CD8-positive, alpha-beta T cell (primary cell): ENCODE measurements at regions of chr19 and their contacts with region 1.

Region 1: GRCh38 chr19:29873024-29873800 is 61.4 kb downstream of the CCNE1 start:
- DNase-seq: peak; percentile 39 to 84 (median 67)
- ATAC-seq: peak; percentile 78
- H3K4me3 ChIP-seq: peak overlapping the region; percentile 18 to 63
- H3K4me3 Mint-ChIP-seq: peak overlapping the region; percentile 78
- H3K27ac ChIP-seq: no peak overlapping the region
- H3K27ac Mint-ChIP-seq: no peak overlapping the region
- H3K4me1 ChIP-seq: peaks cover 4% of the 10 kb centered on the region
- H3K4me1 Mint-ChIP-seq: peaks cover 8% of the 10 kb centered on the region
- H3K27me3 ChIP-seq: peaks cover 0 to 9% of the 10 kb centered on the region in 2 experiments
- H3K27me3 Mint-ChIP-seq: peaks cover 23% of the 10 kb centered on the region
- CTCF ChIP-seq: peak; percentile 94

Region 2: DNA sequence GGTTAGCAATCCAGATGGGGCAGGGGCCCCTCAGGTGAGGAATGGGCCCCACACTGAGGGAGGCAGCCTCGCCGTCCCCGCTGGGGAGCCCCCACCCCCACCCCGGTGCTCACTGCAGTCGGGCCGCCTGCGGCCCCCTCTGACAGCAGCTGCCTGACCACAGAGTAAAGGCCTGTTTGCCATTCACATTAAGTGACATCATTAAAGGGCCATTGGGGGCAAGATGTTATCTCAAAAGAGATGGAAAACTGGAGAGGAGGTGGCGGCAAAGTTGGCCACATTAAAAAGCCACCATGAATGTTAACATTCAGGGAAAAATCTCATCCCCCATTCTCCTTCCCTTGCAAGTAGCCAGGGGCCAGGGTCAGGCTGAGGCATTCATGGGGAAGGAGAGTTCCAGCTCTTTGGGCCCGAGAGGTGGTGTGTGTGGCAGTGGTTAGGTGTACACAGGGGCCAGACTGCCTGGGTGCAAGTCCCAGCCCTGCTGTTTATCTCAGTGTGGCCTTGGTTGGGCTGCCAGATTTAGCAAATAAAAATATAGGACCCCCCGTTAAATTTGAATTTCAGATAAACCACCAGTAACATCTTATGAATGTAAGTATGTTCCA is 326.5 kb before region 1 on chr19:
- CTCF ChIA-PET with region 1: no interaction called
- POLR2A ChIA-PET with region 1: no interaction called
- intact Hi-C with region 1: no loop called
- DNase-seq: no peak
- ATAC-seq: no peak
- H3K4me3 ChIP-seq: no peak overlapping the region
- H3K4me3 Mint-ChIP-seq: no peak overlapping the region
- H3K27ac ChIP-seq: no peak overlapping the region
- H3K27ac Mint-ChIP-seq: no peak overlapping the region
- H3K4me1 ChIP-seq: no peaks in the 10 kb centered on the region
- H3K4me1 Mint-ChIP-seq: no peaks in the 10 kb centered on the region
- H3K27me3 ChIP-seq: peaks cover 0 to 3% of the 10 kb centered on the region in 2 experiments
- H3K27me3 Mint-ChIP-seq: peaks cover 10% of the 10 kb centered on the region
- CTCF ChIP-seq: no peak

Region 3: DNA sequence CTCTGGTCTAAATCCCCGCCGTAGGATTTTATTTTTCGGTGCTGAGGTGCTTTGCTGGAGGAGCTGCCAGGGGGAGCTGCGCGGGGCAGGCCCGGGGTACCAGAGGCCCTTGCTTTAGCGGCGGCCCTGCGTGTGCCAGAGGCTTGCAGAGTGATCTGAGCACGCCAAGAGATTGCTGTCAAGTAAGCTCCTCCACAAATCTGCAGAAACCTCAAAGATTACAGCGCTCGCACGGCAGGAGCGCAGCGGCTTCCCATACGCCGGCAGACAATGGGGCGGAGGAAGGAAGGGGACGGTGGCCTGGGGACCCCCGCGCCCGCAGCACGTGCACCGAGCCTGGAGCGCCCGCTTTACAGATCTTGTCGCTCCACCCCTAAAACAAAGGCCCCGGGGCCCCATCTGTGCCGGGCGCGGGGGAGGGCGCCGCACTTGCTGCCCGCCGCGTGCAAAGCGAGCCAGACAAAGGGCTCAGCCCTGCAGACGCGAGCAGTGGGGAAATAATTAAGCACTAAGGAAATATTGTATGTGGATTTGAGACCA is 149.0 kb before region 1 on chr19:
- CTCF ChIA-PET with region 1: interaction called, 191 read pairs
- POLR2A ChIA-PET with region 1: interaction called, 3 read pairs
- intact Hi-C with region 1: no loop called
- DNase-seq: peak in 6 of 9 experiments; percentile 25 to 67 (median 54)
- ATAC-seq: peak; percentile 80
- H3K4me3 ChIP-seq: peak overlapping the region; percentile 36 to 59
- H3K4me3 Mint-ChIP-seq: peak overlapping the region; percentile 71
- H3K27ac ChIP-seq: no peak overlapping the region
- H3K27ac Mint-ChIP-seq: peak overlapping the region; percentile 46
- H3K4me1 ChIP-seq: peaks cover 12% of the 10 kb centered on the region
- H3K4me1 Mint-ChIP-seq: peaks cover 16% of the 10 kb centered on the region
- H3K27me3 ChIP-seq: no peaks in the 10 kb centered on the region
- H3K27me3 Mint-ChIP-seq: no peaks in the 10 kb centered on the region
- CTCF ChIP-seq: no peak

Region 4: GRCh38 chr19:29735800-29736199 is 137.4 kb before region 1 on chr19:
- CTCF ChIA-PET with region 1: interaction called, 191 read pairs
- POLR2A ChIA-PET with region 1: no interaction called
- intact Hi-C with region 1: loop called in 1 of 2 experiments (anchors 1 kb)
- DNase-seq: no peak
- ATAC-seq: no peak
- H3K4me3 ChIP-seq: no peak overlapping the region
- H3K4me3 Mint-ChIP-seq: no peak overlapping the region
- H3K27ac ChIP-seq: no peak overlapping the region
- H3K27ac Mint-ChIP-seq: no peak overlapping the region
- H3K4me1 ChIP-seq: no peaks in the 10 kb centered on the region
- H3K4me1 Mint-ChIP-seq: no peaks in the 10 kb centered on the region
- H3K27me3 ChIP-seq: no peaks in the 10 kb centered on the region
- H3K27me3 Mint-ChIP-seq: peaks cover 4% of the 10 kb centered on the region
- CTCF ChIP-seq: no peak

Region 5: DNA sequence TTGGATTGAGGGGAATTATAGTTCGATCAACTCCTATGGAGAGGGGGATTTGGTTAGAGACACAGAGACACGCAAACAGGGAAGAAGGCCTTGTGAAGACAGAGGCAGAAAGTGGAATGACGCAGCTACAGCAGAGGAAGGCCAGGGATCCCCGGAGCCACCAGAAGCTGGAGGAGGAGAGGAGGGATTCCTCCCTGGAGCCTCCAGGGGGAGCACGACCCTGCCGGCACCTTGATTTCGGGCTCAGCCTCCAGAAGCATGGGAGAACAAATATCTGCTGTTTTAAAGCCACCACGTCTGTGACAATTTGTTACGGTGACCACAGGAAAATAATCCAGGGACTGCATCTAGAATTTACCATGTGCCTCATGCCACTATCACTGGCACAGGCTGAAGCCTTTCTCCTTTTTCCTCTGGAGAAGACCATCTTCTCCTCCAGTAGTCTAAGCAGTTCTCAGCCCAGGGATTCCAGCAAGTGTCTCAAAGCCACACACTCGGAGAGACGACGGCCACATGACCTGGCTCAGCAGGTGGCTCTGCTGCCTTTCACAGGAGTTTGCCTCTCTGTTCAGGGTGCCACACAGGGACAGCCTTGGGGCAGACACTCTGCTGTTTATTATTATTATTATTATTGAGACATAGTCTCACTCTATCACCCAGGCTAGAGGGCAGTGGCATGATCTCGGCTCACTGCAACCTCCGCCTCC is 101.4 kb before region 1 on chr19:
- CTCF ChIA-PET with region 1: interaction called, 70 read pairs
- POLR2A ChIA-PET with region 1: no interaction called
- intact Hi-C with region 1: loop called in 1 of 2 experiments (anchors 1 kb)
- DNase-seq: peak in 6 of 9 experiments; percentile 10 to 58 (median 32)
- ATAC-seq: no peak
- H3K4me3 ChIP-seq: no peak overlapping the region
- H3K4me3 Mint-ChIP-seq: no peak overlapping the region
- H3K27ac ChIP-seq: no peak overlapping the region
- H3K27ac Mint-ChIP-seq: no peak overlapping the region
- H3K4me1 ChIP-seq: no peaks in the 10 kb centered on the region
- H3K4me1 Mint-ChIP-seq: peaks cover 2% of the 10 kb centered on the region
- H3K27me3 ChIP-seq: no peaks in the 10 kb centered on the region
- H3K27me3 Mint-ChIP-seq: no peaks in the 10 kb centered on the region
- CTCF ChIP-seq: peak; percentile 34

Region 6: GRCh38 chr19:29858000-29858596 is 15.1 kb before region 1 on chr19:
- CTCF ChIA-PET with region 1: interaction called, 40 read pairs
- POLR2A ChIA-PET with region 1: no interaction called
- intact Hi-C with region 1: no loop called
- DNase-seq: peak in 6 of 9 experiments; percentile 33 to 65 (median 50)
- ATAC-seq: peak; percentile 86
- H3K4me3 ChIP-seq: no peak overlapping the region
- H3K4me3 Mint-ChIP-seq: no peak overlapping the region
- H3K27ac ChIP-seq: no peak overlapping the region
- H3K27ac Mint-ChIP-seq: no peak overlapping the region
- H3K4me1 ChIP-seq: peaks cover 5% of the 10 kb centered on the region
- H3K4me1 Mint-ChIP-seq: peaks cover 2% of the 10 kb centered on the region
- H3K27me3 ChIP-seq: peaks cover 0 to 1% of the 10 kb centered on the region in 2 experiments
- H3K27me3 Mint-ChIP-seq: peaks cover 14% of the 10 kb centered on the region
- CTCF ChIP-seq: peak; percentile 67